ENCODE measurements at regions of chr5 and their contacts with region 1.

Region 1: DNA sequence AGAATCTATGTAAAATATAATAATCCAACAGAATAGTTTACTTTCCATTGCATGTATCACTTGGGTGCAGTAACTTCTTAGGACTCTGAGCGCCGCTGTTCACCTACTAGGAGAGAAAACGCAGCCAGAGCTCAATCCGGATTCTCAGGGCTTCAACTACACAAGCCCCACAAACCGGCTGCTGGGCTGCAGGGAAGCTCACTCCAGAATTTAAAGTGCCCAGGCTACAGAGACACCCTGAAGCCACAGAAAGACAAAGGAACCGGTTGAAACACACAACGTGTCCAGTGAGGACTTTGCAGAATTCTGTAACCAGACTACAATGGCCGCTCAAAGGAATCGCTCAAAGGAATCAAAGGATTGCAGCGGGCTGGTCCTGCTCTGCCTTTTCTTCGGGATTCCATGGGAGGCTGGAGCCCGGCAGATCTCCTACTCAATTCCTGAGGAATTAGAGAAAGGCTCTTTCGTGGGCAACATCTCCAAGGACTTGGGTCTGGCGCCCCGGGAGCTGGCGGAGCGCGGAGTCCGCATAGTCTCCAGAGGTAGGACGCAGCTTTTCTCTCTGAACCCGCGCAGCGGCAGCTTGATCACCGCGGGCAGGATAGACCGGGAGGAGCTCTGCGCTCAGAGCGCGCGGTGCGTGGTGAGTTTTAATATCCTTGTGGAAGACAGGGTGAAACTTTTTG is at the start of gene PCDHGA10:
- DNase-seq: peak; percentile 58
- H3K4me3 ChIP-seq: peak within 1 kb of the TSS; percentile 54; the same call in 1 of the 2 replicates
- H3K27ac ChIP-seq: no peak within 1 kb of the TSS
- H3K4me1 ChIP-seq: no peaks in the 10 kb centered on the region
- H3K27me3 ChIP-seq: 0 out of 2 replicates have a peak, but pooled peaks cover 11% of the 10 kb centered on the region
- CTCF ChIP-seq: peak; percentile 86
- total RNA-seq, gene PCDHGA10: 0.13 and 0.15 TPM in 2 replicates

Region 2: GRCh38 chr5:141084487-141084990 is 328.5 kb before region 1 on chr5:
- CTCF ChIA-PET with region 1: interaction called, 4 read pairs
- POLR2A ChIA-PET with region 1: no interaction called
- intact Hi-C with region 1: loop called (anchors 5 kb)
- DNase-seq: peak; percentile 39 to 62
- H3K4me3 ChIP-seq: peak overlapping the region; percentile 59
- H3K27ac ChIP-seq: no peak overlapping the region
- H3K4me1 ChIP-seq: no peaks in the 10 kb centered on the region
- H3K27me3 ChIP-seq: no peaks in the 10 kb centered on the region
- CTCF ChIP-seq: peak; percentile 63

Region 3: GRCh38 chr5:141223112-141223783 is 189.7 kb before region 1 on chr5 and contains the start of gene PCDHB14:
- CTCF ChIA-PET with region 1: interaction called, 3 read pairs
- POLR2A ChIA-PET with region 1: no interaction called
- intact Hi-C with region 1: loop called (anchors 5 kb)
- DNase-seq: peak in 1 of 2 experiments; percentile 9
- H3K4me3 ChIP-seq: peak within 1 kb of the TSS; percentile 52
- H3K27ac ChIP-seq: no peak within 1 kb of the TSS
- H3K4me1 ChIP-seq: no peaks in the 10 kb centered on the region
- H3K27me3 ChIP-seq: no peaks in the 10 kb centered on the region
- CTCF ChIP-seq: peak; percentile 66
- total RNA-seq, gene PCDHB14: 0.07 TPM in 1 of 2 replicates, not detected in the other

Region 4: GRCh38 chr5:141320225-141321169 is 92.5 kb before region 1 on chr5 and contains the start of gene TAF7:
- CTCF ChIA-PET with region 1: no interaction called
- POLR2A ChIA-PET with region 1: interaction called, 8 read pairs
- intact Hi-C with region 1: loop called (anchors 10 kb)
- DNase-seq: peak; percentile 75 to 90
- H3K4me3 ChIP-seq: peak within 1 kb of the TSS; percentile 89
- H3K27ac ChIP-seq: peak within 1 kb of the TSS; percentile 91
- H3K4me1 ChIP-seq: 0 out of 2 replicates have a peak, but pooled peaks cover 5% of the 10 kb centered on the region
- H3K27me3 ChIP-seq: 0 out of 2 replicates have a peak, but pooled peaks cover 6% of the 10 kb centered on the region
- CTCF ChIP-seq: peak; percentile 88
- total RNA-seq, gene TAF7: 56.1 and 57.6 TPM in 2 replicates